Cardiac septum (tissue), 1 donor: ENCODE measurements at regions of chr11 and their contacts with region 1.

Region 1: GRCh38 chr11:16924826-16925560 is 89.2 kb downstream of the PLEKHA7 start:
- DNase-seq: no peak

Region 2: GRCh38 chr11:16820324-16821092 is 104.5 kb before region 1 on chr11:
- intact Hi-C with region 1: loop called (anchors 5 kb)
- DNase-seq: peak; percentile 88